PC-9 (cell line): ENCODE measurements at regions of chr3 and their contacts with region 1.

Region 1: GRCh38 chr3:180617049-180617448 is 15.1 kb downstream of the TTC14 start:
- DNase-seq: no peak
- H3K4me3 ChIP-seq: no peak overlapping the region
- H3K27ac ChIP-seq: no peak overlapping the region
- H3K4me1 ChIP-seq: no peaks in the 10 kb centered on the region
- H3K27me3 ChIP-seq: no peaks in the 10 kb centered on the region
- CTCF ChIP-seq: no peak

Region 2: DNA sequence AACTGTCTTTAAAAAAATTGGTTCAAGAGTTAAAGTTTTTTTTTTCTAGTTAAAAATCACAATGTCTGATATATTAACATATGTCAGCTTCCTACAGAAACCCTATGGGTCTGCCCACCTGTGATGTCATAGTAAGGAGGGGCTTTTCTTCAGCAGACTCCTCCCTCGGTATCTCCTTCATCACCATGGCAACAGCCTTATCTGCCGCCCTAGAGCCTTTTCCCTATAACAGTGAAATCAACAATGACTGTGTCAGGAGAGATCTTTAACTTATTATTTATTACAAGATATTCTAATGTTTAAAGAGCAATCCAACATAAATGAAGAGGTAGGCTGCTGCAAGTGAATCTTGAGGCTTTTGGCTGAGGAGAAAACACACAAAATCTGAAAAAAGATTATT is 719.0 kb before region 1 on chr3:
- CTCF ChIA-PET with region 1: no interaction called
- POLR2A ChIA-PET with region 1: interaction called, 12 read pairs
- intact Hi-C with region 1: no loop called
- DNase-seq: peak; percentile 19 to 71
- H3K4me3 ChIP-seq: no peak overlapping the region
- H3K27ac ChIP-seq: no peak overlapping the region
- H3K4me1 ChIP-seq: no peaks in the 10 kb centered on the region
- H3K27me3 ChIP-seq: no peaks in the 10 kb centered on the region
- CTCF ChIP-seq: no peak

Region 3: DNA sequence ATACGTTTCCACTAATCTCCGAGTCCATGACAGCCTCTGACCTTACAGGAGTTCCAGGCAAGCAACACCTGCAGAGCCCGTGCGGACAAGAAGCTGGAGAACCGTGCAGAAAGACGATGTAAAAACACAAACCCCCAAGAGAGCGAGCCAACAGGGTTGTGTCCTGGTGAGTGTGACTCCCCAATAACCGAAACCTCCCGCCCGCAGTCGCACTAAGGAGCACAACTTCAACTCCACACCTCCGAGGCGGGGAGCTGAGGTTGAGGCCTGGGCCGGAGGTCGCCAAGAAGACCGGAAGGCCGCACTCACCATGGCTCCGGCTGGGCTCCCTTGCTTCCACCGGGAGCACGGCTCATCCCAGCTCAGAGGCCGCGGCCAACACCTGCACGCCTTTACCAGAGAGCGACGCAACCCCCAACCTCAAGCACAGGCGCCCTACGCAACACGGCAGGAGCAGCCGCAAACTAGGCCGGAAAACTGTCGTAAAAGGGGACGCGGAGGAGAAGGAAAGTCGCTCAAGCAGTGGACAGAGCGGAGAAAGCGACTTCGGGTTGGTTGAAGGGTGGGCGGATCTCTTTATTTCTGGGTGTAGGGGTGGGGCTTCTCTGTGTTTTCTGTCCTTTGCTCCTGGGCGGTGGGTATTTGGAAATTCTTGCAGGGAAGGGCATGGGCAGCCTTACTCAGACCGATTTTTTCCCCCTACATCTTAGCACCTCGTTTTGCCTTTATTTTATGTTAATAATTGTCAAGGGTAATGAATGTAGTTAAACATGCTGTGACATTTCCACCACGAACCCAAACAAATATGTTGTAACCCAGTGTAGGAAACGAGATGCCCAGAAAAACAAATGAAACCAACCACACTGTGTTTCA is 372.5 kb after region 1 on chr3 and contains the start of gene DNAJC19:
- CTCF ChIA-PET with region 1: no interaction called
- POLR2A ChIA-PET with region 1: no interaction called
- intact Hi-C with region 1: loop called (anchors 10 kb)
- DNase-seq: peak; percentile 95 to 98
- H3K4me3 ChIP-seq: peak within 1 kb of the TSS; percentile 76
- H3K27ac ChIP-seq: peak within 1 kb of the TSS; percentile 68
- H3K4me1 ChIP-seq: peaks cover 16% of the 10 kb centered on the region
- H3K27me3 ChIP-seq: no peaks in the 10 kb centered on the region
- CTCF ChIP-seq: no peak
- total RNA-seq, gene DNAJC19: 85.6 and 86.9 TPM in 2 replicates